ENCODE measurements at regions of chr13 and their contacts with region 1.

Region 1: GRCh38 chr13:46721054-46721453 is 75.9 kb downstream of the ESD start:
- DNase-seq: peak; percentile 16
- H3K4me3 ChIP-seq: no peak overlapping the region
- H3K27ac ChIP-seq: no peak overlapping the region
- H3K27me3 ChIP-seq: no peaks in the 10 kb centered on the region
- CTCF ChIP-seq: peak; percentile 66

Region 2: GRCh38 chr13:46295491-46296114 is 425.5 kb before region 1 on chr13:
- CTCF ChIA-PET with region 1: no interaction called
- POLR2A ChIA-PET with region 1: no interaction called
- DNase-seq: no peak
- H3K4me3 ChIP-seq: no peak overlapping the region
- H3K27ac ChIP-seq: peak overlapping the region; percentile 50
- H3K27me3 ChIP-seq: peaks cover 5% of the 10 kb centered on the region
- CTCF ChIP-seq: no peak

Region 3: DNA sequence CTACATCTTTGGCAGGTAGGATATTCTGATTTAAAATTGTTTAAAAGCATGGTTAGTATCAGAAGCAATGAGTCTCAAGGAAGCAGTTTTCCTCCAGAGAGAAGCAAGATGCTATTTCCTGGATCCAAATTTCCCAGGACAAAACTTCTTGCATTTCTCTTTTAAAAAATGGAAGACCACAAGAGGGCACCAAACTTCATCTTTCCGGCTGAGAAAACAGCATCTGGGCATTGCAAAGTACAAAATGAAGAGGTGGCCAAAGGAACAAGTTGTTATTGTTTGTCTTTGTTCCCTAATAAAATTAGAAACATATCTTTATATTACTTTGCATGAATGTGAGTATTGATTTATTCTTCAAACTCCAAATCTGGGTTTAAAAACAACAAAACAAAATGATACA is 228.1 kb before region 1 on chr13:
- CTCF ChIA-PET with region 1: interaction called, 54 read pairs
- POLR2A ChIA-PET with region 1: interaction called, 9 read pairs
- DNase-seq: no peak
- H3K4me3 ChIP-seq: no peak overlapping the region
- H3K27ac ChIP-seq: no peak overlapping the region
- H3K27me3 ChIP-seq: peaks cover 9% of the 10 kb centered on the region
- CTCF ChIP-seq: peak; percentile 69

Region 4: DNA sequence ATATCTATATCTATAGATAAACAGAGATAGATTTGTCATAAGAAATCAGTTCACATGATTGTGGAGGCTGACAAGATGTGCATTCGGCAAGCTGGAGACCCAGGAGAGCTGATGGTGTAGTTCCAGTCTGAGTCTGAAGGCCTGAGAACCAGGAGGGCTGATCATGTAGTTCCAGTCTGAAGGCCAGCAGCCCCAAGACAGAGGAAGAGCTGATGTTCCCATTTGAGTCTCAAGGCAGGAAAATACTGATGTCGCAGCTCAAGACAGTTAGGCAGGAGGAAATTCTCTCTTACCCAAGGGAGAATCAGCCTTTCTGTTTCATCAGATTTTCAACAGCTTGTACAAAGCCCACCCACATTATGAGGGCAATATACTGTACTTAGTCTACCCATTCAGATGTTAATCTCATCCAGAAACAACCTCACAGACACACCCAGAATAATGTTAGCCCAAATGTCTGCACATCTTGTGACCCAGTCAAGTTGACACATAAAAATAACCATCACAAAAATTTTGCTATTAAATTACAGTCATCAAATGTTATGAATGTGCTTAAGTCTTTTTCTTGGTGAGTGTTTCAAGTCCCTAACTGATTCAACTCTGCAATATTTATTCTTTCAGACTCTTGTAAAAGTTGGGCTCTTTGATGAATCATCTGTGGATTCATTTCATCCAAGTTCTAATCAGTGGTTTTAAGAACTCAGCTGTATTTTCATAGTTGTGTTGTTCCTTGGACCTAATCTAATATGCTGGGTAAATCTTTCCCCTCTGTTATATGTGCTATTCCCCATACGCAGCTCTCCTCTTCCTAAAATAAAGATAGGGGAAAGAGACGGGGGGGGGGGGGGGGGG is 190.7 kb before region 1 on chr13:
- CTCF ChIA-PET with region 1: interaction called, 11 read pairs
- POLR2A ChIA-PET with region 1: no interaction called
- DNase-seq: no peak
- H3K4me3 ChIP-seq: no peak overlapping the region
- H3K27ac ChIP-seq: no peak overlapping the region
- H3K27me3 ChIP-seq: peaks cover 14% of the 10 kb centered on the region
- CTCF ChIP-seq: no peak